Panc1 (cell line): ENCODE measurements at regions of chr11 and their contacts with region 1.

Region 1: DNA sequence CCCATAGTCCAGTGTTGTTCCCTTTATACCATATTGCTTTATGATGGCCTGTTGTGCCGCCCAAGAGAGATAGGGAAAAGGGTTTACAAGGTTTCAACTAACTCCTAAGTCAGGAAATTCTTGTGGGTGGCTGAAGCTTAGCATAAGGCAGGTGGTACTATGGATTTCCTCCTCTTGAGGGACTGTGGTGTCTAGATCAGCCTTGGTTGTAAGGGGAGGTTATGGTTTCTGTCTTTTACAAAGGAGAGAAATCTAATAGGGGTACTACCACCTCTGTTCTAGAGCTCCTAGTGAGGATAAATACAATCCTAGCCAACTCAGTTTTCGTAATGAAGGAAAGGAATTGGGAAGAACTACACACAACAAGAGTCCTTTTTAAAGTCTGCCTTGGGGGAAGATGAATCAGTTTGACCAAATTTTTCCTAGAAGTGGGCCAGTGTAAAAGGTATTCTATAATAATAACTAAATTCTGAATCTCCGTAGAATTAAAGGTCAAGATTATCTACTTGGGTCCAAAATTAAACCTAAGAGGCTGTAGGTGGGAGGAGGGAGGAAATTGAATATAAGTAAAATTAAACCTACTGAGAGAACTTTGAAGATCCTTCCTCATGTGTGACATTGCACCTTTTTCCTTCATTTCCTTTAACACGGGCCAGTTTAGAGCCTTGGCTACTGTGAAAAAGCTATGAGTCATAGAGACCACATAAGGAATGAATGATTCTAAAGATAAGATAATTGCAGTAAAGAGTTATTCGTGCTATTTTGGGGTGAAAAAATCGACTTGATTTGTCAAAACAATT is 17.2 kb downstream of the DLAT start:
- DNase-seq: no peak
- ATAC-seq: no peak
- H3K4me3 ChIP-seq: no peak overlapping the region
- H3K27ac ChIP-seq: no peak overlapping the region
- H3K4me1 ChIP-seq: no peaks in the 10 kb centered on the region
- H3K27me3 ChIP-seq: no peaks in the 10 kb centered on the region
- CTCF ChIP-seq: no peak

Region 2: GRCh38 chr11:111960916-111961315 is 81.4 kb before region 1 on chr11:
- CTCF ChIA-PET with region 1: no interaction called
- POLR2A ChIA-PET with region 1: interaction called, 17 read pairs
- in situ Hi-C with region 1: no loop called
- intact Hi-C with region 1: no loop called
- DNase-seq: peak; percentile 53
- ATAC-seq: no peak
- H3K4me3 ChIP-seq: no peak overlapping the region
- H3K27ac ChIP-seq: no peak overlapping the region
- H3K4me1 ChIP-seq: no peaks in the 10 kb centered on the region
- H3K27me3 ChIP-seq: no peaks in the 10 kb centered on the region
- CTCF ChIP-seq: no peak

Region 3: DNA sequence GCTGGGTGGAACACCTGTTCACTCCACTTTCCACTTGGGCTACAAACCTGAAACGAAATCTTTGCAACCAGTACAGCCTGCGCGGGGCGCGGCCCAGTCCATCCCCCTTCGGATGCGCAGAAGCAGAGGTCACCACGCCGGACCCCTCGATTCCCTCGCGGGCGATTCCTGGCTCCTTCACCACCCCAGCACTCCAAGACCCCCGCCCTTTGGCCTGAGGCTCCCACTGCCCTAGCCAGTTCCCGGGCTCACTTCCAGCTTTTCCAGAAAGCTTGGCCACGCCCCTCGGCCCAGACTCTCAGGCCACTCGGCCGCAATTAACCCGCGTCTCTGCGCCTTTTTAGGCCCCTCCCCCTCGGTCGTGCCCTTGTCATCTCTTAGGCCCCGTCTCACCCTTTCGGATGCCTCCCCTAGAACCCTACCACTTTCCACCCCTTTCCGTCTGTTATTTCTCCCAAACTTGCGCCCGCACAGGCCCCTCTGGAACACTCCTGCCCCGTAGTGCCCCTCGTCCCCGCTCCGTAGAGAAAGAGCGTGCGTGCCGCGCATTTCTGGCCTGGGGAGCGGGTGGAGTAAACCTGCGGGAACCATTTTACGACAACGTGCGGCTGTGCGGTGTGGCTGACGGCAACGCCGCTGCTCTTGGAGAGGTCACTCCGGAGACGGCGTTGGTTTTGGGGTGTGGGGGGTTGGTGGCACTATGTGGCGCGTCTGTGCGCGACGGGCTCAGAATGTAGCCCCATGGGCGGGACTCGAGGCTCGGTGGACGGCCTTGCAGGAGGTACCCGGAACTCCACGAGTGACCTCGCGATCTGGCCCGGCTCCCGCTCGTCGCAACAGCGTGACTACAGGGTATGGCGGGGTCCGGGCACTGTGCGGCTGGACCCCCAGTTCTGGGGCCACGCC is 17.3 kb before region 1 on chr11 and contains the start of gene DLAT:
- CTCF ChIA-PET with region 1: no interaction called
- POLR2A ChIA-PET with region 1: interaction called, 10 read pairs
- in situ Hi-C with region 1: no loop called
- intact Hi-C with region 1: no loop called
- DNase-seq: peak; percentile 72
- ATAC-seq: peak; percentile 96
- H3K4me3 ChIP-seq: peak within 1 kb of the TSS; percentile 88 to 93
- H3K27ac ChIP-seq: peak within 1 kb of the TSS; percentile 98
- H3K4me1 ChIP-seq: peaks cover 10% of the 10 kb centered on the region
- H3K27me3 ChIP-seq: no peaks in the 10 kb centered on the region
- CTCF ChIP-seq: no peak
- total RNA-seq, gene DLAT: 75.9 TPM